Endothelial cell of umbilical vein (primary cell): ENCODE measurements at regions of chr10 and their contacts with region 1.

Region 1: DNA sequence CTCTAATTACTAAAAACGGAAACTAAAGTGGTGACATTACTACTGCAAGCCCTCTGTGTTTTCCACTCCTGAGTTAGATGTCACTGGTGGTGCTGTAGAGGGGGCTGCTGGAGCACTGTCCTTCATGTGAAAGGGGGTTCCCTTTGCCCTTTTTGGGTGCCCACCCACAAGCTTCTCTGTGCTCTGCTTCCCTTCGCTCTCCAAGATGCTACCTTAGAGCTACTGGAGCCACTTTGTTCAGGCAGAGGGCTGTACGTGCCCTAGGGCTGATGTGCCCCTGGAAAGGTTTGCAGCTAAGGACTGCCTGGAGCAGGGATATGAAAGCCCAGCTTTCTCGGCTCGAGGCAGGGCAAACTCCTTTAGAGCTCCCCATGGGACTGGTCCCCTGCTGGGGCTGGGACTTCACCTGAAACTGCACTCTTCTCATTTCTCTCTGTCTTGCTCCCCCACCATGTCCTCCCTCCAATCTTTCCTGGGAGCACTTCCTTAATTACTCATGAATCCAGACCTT is 28.4 kb downstream of the EMX2 start:
- DNase-seq: no peak
- H3K4me3 ChIP-seq: no peak overlapping the region
- H3K27ac ChIP-seq: no peak overlapping the region
- H3K4me1 ChIP-seq: no peaks in the 10 kb centered on the region
- H3K27me3 ChIP-seq: no peaks in the 10 kb centered on the region
- CTCF ChIP-seq: no peak
- POLR2A ChIP-seq: no peak

Region 2: DNA sequence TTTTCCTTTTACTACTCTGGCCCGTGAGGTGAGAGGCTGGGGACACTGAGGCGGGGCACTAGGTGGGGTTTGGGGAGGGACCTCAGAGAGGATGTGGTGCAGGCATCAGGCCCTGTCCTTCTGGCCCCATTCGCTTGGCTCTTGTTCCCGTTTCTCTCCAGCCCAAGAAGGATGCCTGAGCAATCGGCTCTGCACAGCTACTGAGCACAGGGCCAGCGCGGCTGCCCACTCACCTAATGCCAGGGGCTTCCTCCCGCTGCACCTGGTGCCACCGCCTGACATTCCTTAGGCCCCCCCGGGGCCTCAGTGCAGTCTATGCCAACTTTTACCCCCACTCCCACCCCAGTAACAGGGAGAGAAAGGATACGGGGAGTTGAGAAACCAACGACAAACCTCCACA is 15.9 kb before region 1 on chr10:
- CTCF ChIA-PET with region 1: no interaction called
- POLR2A ChIA-PET with region 1: no interaction called
- dilution Hi-C with region 1: no loop called
- intact Hi-C with region 1: no loop called
- DNase-seq: no peak
- H3K4me3 ChIP-seq: no peak overlapping the region
- H3K27ac ChIP-seq: no peak overlapping the region
- H3K4me1 ChIP-seq: no peaks in the 10 kb centered on the region
- H3K27me3 ChIP-seq: peaks cover 38 to 46% of the 10 kb centered on the region in 2 experiments
- CTCF ChIP-seq: no peak
- POLR2A ChIP-seq: no peak

Region 3: DNA sequence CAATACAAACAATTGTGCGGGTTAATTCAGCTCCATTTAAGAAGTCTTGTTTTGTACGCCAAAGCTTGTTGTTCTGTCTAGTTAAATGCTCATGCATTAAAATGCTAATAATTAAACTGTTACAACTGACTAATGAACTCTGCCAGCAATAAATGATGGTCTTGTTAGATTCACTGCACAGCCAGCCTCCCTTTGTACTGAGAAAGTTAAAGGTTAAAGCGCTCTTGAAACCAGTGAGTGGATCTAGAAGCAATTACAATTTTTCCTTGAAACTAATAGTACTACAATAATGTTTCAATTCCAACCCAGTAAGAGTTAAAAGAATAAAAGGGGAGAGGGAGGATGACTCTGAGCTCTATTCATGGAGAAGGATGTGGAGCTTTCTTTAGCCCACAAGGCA is 204.6 kb after region 1 on chr10:
- CTCF ChIA-PET with region 1: no interaction called
- POLR2A ChIA-PET with region 1: no interaction called
- dilution Hi-C with region 1: no loop called
- intact Hi-C with region 1: no loop called
- DNase-seq: no peak
- H3K4me3 ChIP-seq: no peak overlapping the region
- H3K27ac ChIP-seq: no peak overlapping the region
- H3K4me1 ChIP-seq: no peaks in the 10 kb centered on the region
- H3K27me3 ChIP-seq: no peaks in the 10 kb centered on the region
- CTCF ChIP-seq: no peak
- POLR2A ChIP-seq: no peak

Region 4: GRCh38 chr10:118300320-118300719 is 729.4 kb after region 1 on chr10:
- CTCF ChIA-PET with region 1: no interaction called
- POLR2A ChIA-PET with region 1: interaction called, 11 read pairs
- dilution Hi-C with region 1: no loop called
- intact Hi-C with region 1: no loop called
- DNase-seq: no peak
- H3K4me3 ChIP-seq: no peak overlapping the region
- H3K27ac ChIP-seq: no peak overlapping the region
- H3K4me1 ChIP-seq: no peaks in the 10 kb centered on the region
- H3K27me3 ChIP-seq: peaks cover 0 to 2% of the 10 kb centered on the region in 2 experiments
- CTCF ChIP-seq: no peak
- POLR2A ChIP-seq: no peak